ENCODE measurements at regions of chr18 and their contacts with region 1.

Region 1: GRCh38 chr18:76914314-76914713 is 92.0 kb downstream of the ZNF236 start:
- DNase-seq: no peak
- ATAC-seq: no peak
- H3K4me3 Mint-ChIP-seq: no peak overlapping the region
- H3K27ac Mint-ChIP-seq: no peak overlapping the region
- H3K4me1 Mint-ChIP-seq: no peaks in the 10 kb centered on the region
- H3K27me3 Mint-ChIP-seq: no peaks in the 10 kb centered on the region

Region 2: DNA sequence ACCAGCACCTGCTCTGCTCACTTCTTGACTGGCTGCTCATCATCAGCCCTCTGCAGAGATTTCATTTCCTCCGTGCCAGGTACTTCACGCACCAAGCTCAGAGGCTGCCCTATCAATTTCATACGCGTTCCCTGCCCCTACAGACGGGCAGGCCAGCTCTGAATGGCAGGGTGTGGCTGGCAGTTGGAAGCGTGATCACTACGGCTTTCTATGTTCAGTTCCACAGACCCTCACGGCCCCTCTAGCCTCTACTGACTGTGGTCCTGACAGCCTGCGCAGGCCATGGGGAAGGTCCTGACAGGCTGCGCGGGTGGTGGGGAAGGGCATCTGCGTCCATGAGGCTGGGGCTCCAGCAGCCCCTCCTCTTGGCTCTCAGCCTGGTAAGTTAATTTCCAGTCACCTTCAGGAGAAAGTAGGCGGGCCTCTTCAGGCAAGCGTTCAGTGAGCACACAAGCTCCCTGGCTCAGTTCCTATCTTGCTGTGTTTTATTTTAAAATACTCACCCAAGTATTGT is 62.9 kb after region 1 on chr18:
- CTCF ChIA-PET with region 1: no interaction called
- POLR2A ChIA-PET with region 1: no interaction called
- intact Hi-C with region 1: no loop called
- DNase-seq: no peak
- ATAC-seq: no peak
- H3K4me3 Mint-ChIP-seq: no peak overlapping the region
- H3K27ac Mint-ChIP-seq: no peak overlapping the region
- H3K4me1 Mint-ChIP-seq: peaks cover 2% of the 10 kb centered on the region
- H3K27me3 Mint-ChIP-seq: no peaks in the 10 kb centered on the region

Region 3: GRCh38 chr18:77457681-77458080 is 543.4 kb after region 1 on chr18:
- CTCF ChIA-PET with region 1: no interaction called
- POLR2A ChIA-PET with region 1: no interaction called
- intact Hi-C with region 1: loop called in 1 of 2 experiments (anchors 10 kb)
- DNase-seq: no peak
- ATAC-seq: no peak
- H3K4me3 Mint-ChIP-seq: no peak overlapping the region
- H3K27ac Mint-ChIP-seq: no peak overlapping the region
- H3K4me1 Mint-ChIP-seq: no peaks in the 10 kb centered on the region
- H3K27me3 Mint-ChIP-seq: peaks cover 14% of the 10 kb centered on the region